Activated CD4-positive, alpha-beta memory T cell treated with anti-CD3 and anti-CD28 coated beads for 36 hours (primary cell): ENCODE measurements at regions of chr7 and their contacts with region 1.

Region 1: DNA sequence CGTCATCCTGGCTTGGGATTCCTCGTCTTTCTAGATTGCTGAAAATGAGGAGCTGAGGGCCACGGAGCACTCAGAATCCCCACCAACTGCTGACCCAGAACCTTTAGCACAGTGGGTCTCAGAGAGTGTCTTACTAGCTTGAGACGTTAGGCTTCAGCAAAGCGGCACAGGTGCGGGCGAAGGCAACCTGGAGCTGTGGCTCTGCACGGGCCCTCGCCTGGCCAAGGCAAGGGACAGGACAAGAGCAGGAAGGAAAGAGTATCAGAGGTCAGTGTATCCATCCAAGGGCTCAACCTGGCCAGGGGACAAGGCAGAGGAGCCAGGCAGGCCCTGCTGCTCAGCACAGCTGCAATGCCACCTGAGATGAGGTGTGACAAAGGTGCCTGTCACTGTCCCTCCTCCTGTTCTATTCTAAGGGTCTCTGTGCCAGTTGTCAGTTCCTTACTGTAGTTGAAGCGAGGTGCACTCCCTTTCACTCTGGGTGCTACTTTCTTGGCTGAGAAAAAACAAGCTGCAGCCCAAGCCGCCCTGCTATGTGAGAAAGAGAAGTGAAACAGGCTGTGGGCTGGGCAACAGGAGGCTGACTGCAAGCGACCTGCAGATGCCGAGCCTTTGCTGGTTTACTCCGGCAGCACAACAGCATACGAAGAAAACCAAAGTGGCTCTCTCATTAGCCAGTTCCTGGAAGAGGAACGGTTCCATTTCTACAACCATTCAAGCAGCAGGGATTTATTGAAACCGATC is 33.3 kb upstream of the KDM7A start:
- DNase-seq: peak; percentile 87
- H3K4me3 Mint-ChIP-seq: peak overlapping the region; percentile 38
- H3K27ac Mint-ChIP-seq: peak overlapping the region; percentile 86
- H3K4me1 Mint-ChIP-seq: peaks cover 86% of the 10 kb centered on the region
- H3K27me3 Mint-ChIP-seq: no peaks in the 10 kb centered on the region

Region 2: GRCh38 chr7:139680676-139681462 is 529.2 kb before region 1 on chr7:
- CTCF ChIA-PET with region 1: no interaction called
- POLR2A ChIA-PET with region 1: no interaction called
- intact Hi-C with region 1: loop called (anchors 5 kb)
- DNase-seq: peak; percentile 92
- H3K4me3 Mint-ChIP-seq: no peak overlapping the region
- H3K27ac Mint-ChIP-seq: peak overlapping the region; percentile 94
- H3K4me1 Mint-ChIP-seq: peaks cover 48% of the 10 kb centered on the region
- H3K27me3 Mint-ChIP-seq: no peaks in the 10 kb centered on the region

Region 3: DNA sequence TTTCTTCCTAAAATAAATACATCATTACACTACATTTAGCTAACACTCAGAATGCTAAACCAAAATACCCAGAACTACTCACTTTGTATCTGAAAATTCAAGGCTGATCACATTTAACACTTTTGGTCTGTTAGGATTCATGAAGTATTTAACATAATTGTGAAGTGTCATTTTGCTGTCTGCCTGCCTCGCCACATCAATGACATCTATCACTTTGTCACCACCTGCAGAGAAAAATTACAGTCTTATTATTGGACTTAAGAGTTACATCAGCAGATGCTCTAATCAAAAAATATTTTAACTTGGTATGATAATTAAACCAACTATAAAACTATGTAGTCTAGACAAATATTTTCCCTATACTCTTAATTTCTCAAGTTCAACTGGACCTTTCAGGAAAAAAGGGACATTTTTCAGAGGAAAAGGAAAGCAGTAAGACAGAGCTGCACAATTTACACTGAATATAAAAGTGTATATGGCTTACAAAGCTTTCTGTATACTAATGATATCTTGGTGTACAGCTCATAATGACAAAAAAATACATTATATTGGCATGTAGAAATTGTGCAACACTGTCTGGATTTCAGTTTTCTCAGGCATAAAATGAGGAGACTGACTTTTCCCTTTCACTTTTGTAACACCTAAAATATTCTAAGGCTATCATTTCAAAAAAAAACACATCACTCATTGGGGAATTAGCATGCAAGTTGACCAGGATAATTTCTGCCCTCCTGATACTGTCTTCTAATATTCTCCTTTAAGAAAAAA is 82.5 kb before region 1 on chr7:
- CTCF ChIA-PET with region 1: no interaction called
- POLR2A ChIA-PET with region 1: no interaction called
- intact Hi-C with region 1: no loop called
- DNase-seq: no peak
- H3K4me3 Mint-ChIP-seq: no peak overlapping the region
- H3K27ac Mint-ChIP-seq: no peak overlapping the region
- H3K4me1 Mint-ChIP-seq: peaks cover 21% of the 10 kb centered on the region
- H3K27me3 Mint-ChIP-seq: no peaks in the 10 kb centered on the region

Region 4: DNA sequence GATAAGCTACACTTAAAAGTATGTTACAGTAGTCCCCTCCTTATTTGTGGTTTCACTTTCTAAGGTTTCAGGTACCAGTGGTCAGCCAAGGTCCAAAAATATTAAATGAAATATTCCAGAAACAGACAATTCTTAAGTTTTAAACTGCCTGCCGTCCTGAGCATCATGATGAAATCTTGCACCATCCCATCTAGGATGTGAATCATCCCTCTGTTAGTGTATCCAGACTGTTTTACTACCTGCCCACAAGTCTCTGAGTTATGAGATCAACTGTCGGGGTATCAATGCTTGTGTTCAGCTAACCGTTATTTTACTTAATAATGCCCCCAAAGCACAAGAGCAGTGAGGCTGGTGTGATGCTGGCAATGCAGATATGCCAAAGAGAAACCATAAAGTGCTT is 44.6 kb before region 1 on chr7:
- CTCF ChIA-PET with region 1: no interaction called
- POLR2A ChIA-PET with region 1: no interaction called
- intact Hi-C with region 1: no loop called
- DNase-seq: no peak
- H3K4me3 Mint-ChIP-seq: peak overlapping the region; percentile 45
- H3K27ac Mint-ChIP-seq: peak overlapping the region; percentile 90
- H3K4me1 Mint-ChIP-seq: peaks cover 76% of the 10 kb centered on the region
- H3K27me3 Mint-ChIP-seq: no peaks in the 10 kb centered on the region

Region 5: GRCh38 chr7:140196361-140197217 is 13.4 kb before region 1 on chr7:
- CTCF ChIA-PET with region 1: interaction called, 8 read pairs
- POLR2A ChIA-PET with region 1: interaction called, 5 read pairs
- intact Hi-C with region 1: loop called (anchors 1 kb)
- DNase-seq: no peak
- H3K4me3 Mint-ChIP-seq: no peak overlapping the region
- H3K27ac Mint-ChIP-seq: peak overlapping the region; percentile 24
- H3K4me1 Mint-ChIP-seq: peaks cover 33% of the 10 kb centered on the region
- H3K27me3 Mint-ChIP-seq: no peaks in the 10 kb centered on the region

Region 6: GRCh38 chr7:140222814-140223213 is 12.8 kb after region 1 on chr7:
- CTCF ChIA-PET with region 1: interaction called, 3 read pairs
- POLR2A ChIA-PET with region 1: interaction called, 52 read pairs
- intact Hi-C with region 1: loop called (anchors 1 kb)
- DNase-seq: no peak
- H3K4me3 Mint-ChIP-seq: no peak overlapping the region
- H3K27ac Mint-ChIP-seq: no peak overlapping the region
- H3K4me1 Mint-ChIP-seq: peaks cover 39% of the 10 kb centered on the region
- H3K27me3 Mint-ChIP-seq: no peaks in the 10 kb centered on the region

Region 7: GRCh38 chr7:140230861-140231770 is 21.1 kb after region 1 on chr7:
- CTCF ChIA-PET with region 1: interaction called, 5 read pairs
- POLR2A ChIA-PET with region 1: interaction called, 52 read pairs
- intact Hi-C with region 1: loop called (anchors 1 kb)
- DNase-seq: peak; percentile 78
- H3K4me3 Mint-ChIP-seq: peak overlapping the region; percentile 79
- H3K27ac Mint-ChIP-seq: peak overlapping the region; percentile 99
- H3K4me1 Mint-ChIP-seq: peaks cover 32% of the 10 kb centered on the region
- H3K27me3 Mint-ChIP-seq: no peaks in the 10 kb centered on the region

Region 8: GRCh38 chr7:140249036-140249806 is 39.2 kb after region 1 on chr7:
- CTCF ChIA-PET with region 1: interaction called, 3 read pairs
- POLR2A ChIA-PET with region 1: interaction called, 18 read pairs
- intact Hi-C with region 1: loop called (anchors 1 kb)
- DNase-seq: no peak
- H3K4me3 Mint-ChIP-seq: no peak overlapping the region
- H3K27ac Mint-ChIP-seq: no peak overlapping the region
- H3K4me1 Mint-ChIP-seq: peaks cover 26% of the 10 kb centered on the region
- H3K27me3 Mint-ChIP-seq: no peaks in the 10 kb centered on the region